ENCODE measurements at regions of chr17 and their contacts with region 1.

Region 1: GRCh38 chr17:4215882-4216570 is 47.8 kb downstream of the ANKFY1 start:
- DNase-seq: no peak
- H3K4me3 Mint-ChIP-seq: no peak overlapping the region
- H3K27ac Mint-ChIP-seq: no peak overlapping the region
- H3K4me1 Mint-ChIP-seq: peaks cover 8% of the 10 kb centered on the region
- H3K27me3 Mint-ChIP-seq: no peaks in the 10 kb centered on the region

Region 2: GRCh38 chr17:4064366-4064765 is 151.7 kb before region 1 on chr17:
- CTCF ChIA-PET with region 1: no interaction called
- POLR2A ChIA-PET with region 1: no interaction called
- DNase-seq: no peak
- H3K4me3 Mint-ChIP-seq: no peak overlapping the region
- H3K27ac Mint-ChIP-seq: no peak overlapping the region
- H3K4me1 Mint-ChIP-seq: no peaks in the 10 kb centered on the region
- H3K27me3 Mint-ChIP-seq: no peaks in the 10 kb centered on the region

Region 3: DNA sequence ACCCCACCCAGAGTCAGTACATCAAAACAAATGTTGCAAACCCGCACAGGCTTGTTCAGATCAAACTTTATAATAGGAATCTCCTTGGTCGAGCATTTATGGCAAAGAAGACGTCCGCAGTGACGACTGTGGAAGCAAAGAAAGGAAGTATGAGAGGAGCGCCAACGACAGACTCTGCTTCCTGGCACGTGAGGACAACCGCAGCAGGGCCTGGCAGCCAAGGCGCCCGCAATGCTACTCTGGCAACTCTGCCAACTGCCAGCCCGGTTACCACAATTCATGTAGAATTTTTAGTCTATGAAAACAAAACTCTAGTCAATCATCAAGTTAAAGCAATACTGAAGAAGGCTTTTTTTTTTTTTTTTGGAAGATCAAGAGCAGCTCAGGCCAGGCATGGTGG is 48.2 kb before region 1 on chr17:
- CTCF ChIA-PET with region 1: no interaction called
- POLR2A ChIA-PET with region 1: no interaction called
- DNase-seq: no peak
- H3K4me3 Mint-ChIP-seq: no peak overlapping the region
- H3K27ac Mint-ChIP-seq: no peak overlapping the region
- H3K4me1 Mint-ChIP-seq: peaks cover 4% of the 10 kb centered on the region
- H3K27me3 Mint-ChIP-seq: no peaks in the 10 kb centered on the region

Region 4: DNA sequence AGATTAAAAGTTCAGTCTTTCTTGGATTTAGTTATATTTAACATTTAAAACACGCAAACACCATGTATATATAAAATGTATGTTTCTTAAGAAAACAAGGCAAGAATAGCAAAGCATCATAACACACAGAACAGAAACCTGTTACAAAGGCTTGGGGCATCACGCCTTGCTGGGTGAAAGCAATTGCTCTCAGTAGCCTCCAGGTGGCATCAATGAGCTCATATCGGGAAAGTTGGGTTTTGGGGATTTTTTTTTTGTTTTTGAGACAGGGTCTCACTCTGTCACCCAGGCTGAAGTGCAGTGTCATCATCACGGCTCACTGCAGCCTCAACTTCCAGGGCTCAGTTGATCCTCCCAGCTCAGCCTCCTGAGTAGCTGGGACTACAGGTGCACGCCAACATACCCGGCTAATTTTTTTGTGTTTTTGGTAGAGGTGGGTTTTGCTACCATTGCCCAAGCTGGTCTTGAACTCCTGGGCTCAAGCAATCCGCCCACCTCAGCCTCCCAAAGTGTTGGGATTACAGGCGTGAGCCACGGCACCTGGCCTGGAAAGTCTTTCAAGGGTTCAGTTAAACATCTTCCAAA is 16.1 kb before region 1 on chr17:
- CTCF ChIA-PET with region 1: interaction called, 20 read pairs
- POLR2A ChIA-PET with region 1: no interaction called
- DNase-seq: peak; percentile 43
- H3K4me3 Mint-ChIP-seq: no peak overlapping the region
- H3K27ac Mint-ChIP-seq: no peak overlapping the region
- H3K4me1 Mint-ChIP-seq: no peaks in the 10 kb centered on the region
- H3K27me3 Mint-ChIP-seq: no peaks in the 10 kb centered on the region

Region 5: GRCh38 chr17:4229627-4230541 is 13.9 kb after region 1 on chr17:
- CTCF ChIA-PET with region 1: interaction called, 13 read pairs
- POLR2A ChIA-PET with region 1: interaction called, 3 read pairs
- DNase-seq: no peak
- H3K4me3 Mint-ChIP-seq: no peak overlapping the region
- H3K27ac Mint-ChIP-seq: no peak overlapping the region
- H3K4me1 Mint-ChIP-seq: peaks cover 13% of the 10 kb centered on the region
- H3K27me3 Mint-ChIP-seq: no peaks in the 10 kb centered on the region

Region 6: GRCh38 chr17:4249452-4250029 is 33.5 kb after region 1 on chr17:
- CTCF ChIA-PET with region 1: interaction called, 12 read pairs
- POLR2A ChIA-PET with region 1: no interaction called
- DNase-seq: no peak
- H3K4me3 Mint-ChIP-seq: no peak overlapping the region
- H3K27ac Mint-ChIP-seq: peak overlapping the region; percentile 6
- H3K4me1 Mint-ChIP-seq: peaks cover 44% of the 10 kb centered on the region
- H3K27me3 Mint-ChIP-seq: no peaks in the 10 kb centered on the region

Region 7: GRCh38 chr17:4304417-4305027 is 88.5 kb after region 1 on chr17:
- CTCF ChIA-PET with region 1: interaction called, 15 read pairs
- POLR2A ChIA-PET with region 1: no interaction called
- DNase-seq: peak; percentile 52
- H3K4me3 Mint-ChIP-seq: no peak overlapping the region
- H3K27ac Mint-ChIP-seq: no peak overlapping the region
- H3K4me1 Mint-ChIP-seq: peaks cover 17% of the 10 kb centered on the region
- H3K27me3 Mint-ChIP-seq: no peaks in the 10 kb centered on the region

Region 8: GRCh38 chr17:4412933-4413831 is 197.2 kb after region 1 on chr17:
- CTCF ChIA-PET with region 1: interaction called, 62 read pairs
- POLR2A ChIA-PET with region 1: interaction called, 5 read pairs
- DNase-seq: peak; percentile 93
- H3K4me3 Mint-ChIP-seq: peak overlapping the region; percentile 60
- H3K27ac Mint-ChIP-seq: peak overlapping the region; percentile 32
- H3K4me1 Mint-ChIP-seq: peaks cover 7% of the 10 kb centered on the region
- H3K27me3 Mint-ChIP-seq: no peaks in the 10 kb centered on the region

Measured in activated CD4-positive, alpha-beta memory T cell treated with anti-CD3 and anti-CD28 coated beads, Interleukin-2, amount 10 ng/mL, durations not matched to agents 7 days and 5 days (primary cell).